GM12878 (cell line): ENCODE measurements at regions of chr5 and their contacts with region 1.

Region 1: DNA sequence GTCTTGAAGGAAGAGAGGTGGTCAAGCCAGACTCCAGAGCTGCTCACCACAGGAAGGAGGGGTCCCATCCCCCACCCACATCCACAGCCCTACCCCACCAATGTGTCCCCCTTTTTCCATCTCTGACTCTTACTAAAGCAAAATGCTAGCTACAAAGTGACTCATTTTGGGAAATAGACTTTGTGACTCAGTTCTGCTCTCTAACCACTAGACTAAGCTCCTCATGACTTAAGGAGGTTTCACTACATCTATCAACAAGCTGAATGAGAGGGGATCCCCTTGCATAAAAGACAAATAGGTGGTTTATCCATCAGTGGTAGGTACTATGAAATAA is 35.1 kb upstream of the ADRB2 start:
- DNase-seq: peak; percentile 77
- ATAC-seq: peak; percentile 96
- H3K4me3 ChIP-seq: no peak overlapping the region
- H3K27ac ChIP-seq: no peak overlapping the region
- H3K4me1 ChIP-seq: peaks cover 37% of the 10 kb centered on the region
- H3K27me3 ChIP-seq: no peaks in the 10 kb centered on the region
- CTCF ChIP-seq: no peak
- EP300 ChIP-seq: peak; percentile 53 to 93; a peak in 2 of 4 replicates
- POLR2A ChIP-seq: no peak
- RAD21 ChIP-seq: 0 out of 2 replicates have a peak, but pooled peaks have one; percentile 6

Region 2: GRCh38 chr5:148659641-148660345 is 131.5 kb before region 1 on chr5:
- CTCF ChIA-PET with region 1: no interaction called
- POLR2A ChIA-PET with region 1: no interaction called
- RAD21 ChIA-PET with region 1: no interaction called
- SMC1A ChIA-PET with region 1: no interaction called
- in situ Hi-C with region 1: no loop called
- intact Hi-C with region 1: no loop called
- DNase-seq: no peak
- ATAC-seq: no peak
- H3K4me3 ChIP-seq: no peak overlapping the region
- H3K27ac ChIP-seq: no peak overlapping the region
- H3K4me1 ChIP-seq: no peaks in the 10 kb centered on the region
- H3K27me3 ChIP-seq: no peaks in the 10 kb centered on the region; a peak in 2 of 4 replicates
- CTCF ChIP-seq: no peak
- EP300 ChIP-seq: no peak
- POLR2A ChIP-seq: no peak
- RAD21 ChIP-seq: no peak

Region 3: GRCh38 chr5:148746826-148747535 is 44.3 kb before region 1 on chr5:
- CTCF ChIA-PET with region 1: interaction called, 8 read pairs
- POLR2A ChIA-PET with region 1: interaction called, 8 read pairs
- RAD21 ChIA-PET with region 1: interaction called, 4 read pairs
- SMC1A ChIA-PET with region 1: interaction called, 8 read pairs
- in situ Hi-C with region 1: no loop called
- intact Hi-C with region 1: loop called (anchors 5 kb)
- DNase-seq: no peak
- ATAC-seq: peak; percentile 90
- H3K4me3 ChIP-seq: no peak overlapping the region
- H3K27ac ChIP-seq: no peak overlapping the region
- H3K4me1 ChIP-seq: peaks cover 9% of the 10 kb centered on the region
- H3K27me3 ChIP-seq: no peaks in the 10 kb centered on the region
- CTCF ChIP-seq: no peak
- EP300 ChIP-seq: no peak
- POLR2A ChIP-seq: no peak
- RAD21 ChIP-seq: no peak

Region 4: GRCh38 chr5:148760945-148761638 is 30.2 kb before region 1 on chr5:
- CTCF ChIA-PET with region 1: interaction called, 5 read pairs
- POLR2A ChIA-PET with region 1: no interaction called
- RAD21 ChIA-PET with region 1: interaction called, 4 read pairs
- SMC1A ChIA-PET with region 1: interaction called, 11 read pairs
- in situ Hi-C with region 1: no loop called
- intact Hi-C with region 1: no loop called
- DNase-seq: peak; percentile 59
- ATAC-seq: peak; percentile 100
- H3K4me3 ChIP-seq: no peak overlapping the region
- H3K27ac ChIP-seq: no peak overlapping the region
- H3K4me1 ChIP-seq: peaks cover 8% of the 10 kb centered on the region
- H3K27me3 ChIP-seq: no peaks in the 10 kb centered on the region
- CTCF ChIP-seq: no peak
- EP300 ChIP-seq: no peak
- POLR2A ChIP-seq: no peak
- RAD21 ChIP-seq: no peak

Region 5: GRCh38 chr5:148820461-148821395 is 29.4 kb after region 1 on chr5:
- CTCF ChIA-PET with region 1: interaction called, 10 read pairs
- POLR2A ChIA-PET with region 1: no interaction called
- RAD21 ChIA-PET with region 1: no interaction called
- SMC1A ChIA-PET with region 1: interaction called, 5 read pairs
- in situ Hi-C with region 1: no loop called
- intact Hi-C with region 1: no loop called
- DNase-seq: no peak
- ATAC-seq: peak; percentile 76
- H3K4me3 ChIP-seq: no peak overlapping the region
- H3K27ac ChIP-seq: no peak overlapping the region
- H3K4me1 ChIP-seq: peaks cover 5% of the 10 kb centered on the region
- H3K27me3 ChIP-seq: no peaks in the 10 kb centered on the region
- CTCF ChIP-seq: peak; percentile 49 to 59 (median 59); a peak in 5 of 6 replicates
- EP300 ChIP-seq: no peak
- POLR2A ChIP-seq: no peak
- RAD21 ChIP-seq: peak; percentile 41

Region 6: GRCh38 chr5:148928141-148928540 is 136.8 kb after region 1 on chr5:
- CTCF ChIA-PET with region 1: no interaction called
- POLR2A ChIA-PET with region 1: no interaction called
- RAD21 ChIA-PET with region 1: no interaction called
- SMC1A ChIA-PET with region 1: no interaction called
- in situ Hi-C with region 1: no loop called
- intact Hi-C with region 1: no loop called
- DNase-seq: no peak
- ATAC-seq: peak; percentile 28; the same call in 1 of the 3 replicates
- H3K4me3 ChIP-seq: no peak overlapping the region
- H3K27ac ChIP-seq: no peak overlapping the region
- H3K4me1 ChIP-seq: no peaks in the 10 kb centered on the region
- H3K27me3 ChIP-seq: no peaks in the 10 kb centered on the region
- CTCF ChIP-seq: no peak
- EP300 ChIP-seq: no peak
- POLR2A ChIP-seq: no peak
- RAD21 ChIP-seq: no peak

Region 7: DNA sequence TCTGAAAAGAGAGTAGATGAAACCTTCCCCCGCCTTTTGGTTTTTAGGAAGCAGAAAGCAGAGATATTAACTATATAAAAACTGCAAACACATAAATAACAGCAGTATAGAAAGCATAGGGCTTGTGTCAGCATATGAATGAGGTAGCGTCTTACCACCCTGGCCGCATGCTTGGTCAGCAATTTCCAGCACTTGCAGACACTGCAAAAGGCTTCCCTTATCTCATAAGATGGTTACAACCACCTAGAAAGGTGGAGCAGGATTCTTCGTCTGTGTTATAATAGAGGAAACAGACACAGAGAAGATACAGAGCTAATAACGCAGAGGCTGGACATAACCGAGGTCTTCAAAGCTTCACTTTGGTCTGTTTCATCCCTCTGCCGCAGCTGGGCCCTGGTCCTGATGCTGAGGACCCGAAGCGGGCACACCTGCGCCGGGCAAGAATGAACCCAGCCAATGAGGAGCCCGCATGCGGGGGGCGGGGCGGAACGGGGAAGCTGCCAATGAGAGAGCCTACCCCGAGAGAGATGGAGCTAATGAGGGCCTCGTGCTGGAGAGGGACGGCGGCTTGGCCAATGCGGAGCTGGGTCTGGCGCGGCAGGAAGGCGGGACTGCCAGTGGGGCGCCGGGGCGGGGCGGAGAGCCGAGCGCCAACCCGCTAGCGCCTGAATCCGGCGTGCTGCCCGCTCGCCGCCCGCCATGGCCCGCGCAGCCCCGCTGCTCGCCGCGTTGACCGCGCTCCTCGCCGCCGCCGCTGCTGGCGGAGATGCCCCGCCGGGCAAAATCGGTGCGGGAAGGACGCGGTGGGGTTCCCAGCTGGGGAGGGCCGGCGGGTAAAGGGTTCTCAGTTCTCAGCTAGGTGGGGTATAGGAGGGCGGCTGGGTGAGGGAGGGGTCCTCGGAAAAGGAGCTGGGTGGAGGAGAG is 566.3 kb after region 1 on chr5 and contains the start of gene PCYOX1L:
- CTCF ChIA-PET with region 1: no interaction called
- POLR2A ChIA-PET with region 1: no interaction called
- RAD21 ChIA-PET with region 1: no interaction called
- SMC1A ChIA-PET with region 1: no interaction called
- in situ Hi-C with region 1: no loop called
- intact Hi-C with region 1: no loop called
- DNase-seq: peak; percentile 82
- ATAC-seq: peak; percentile 100
- H3K4me3 ChIP-seq: peak within 1 kb of the TSS; percentile 84
- H3K27ac ChIP-seq: peak within 1 kb of the TSS; percentile 48
- H3K4me1 ChIP-seq: peaks cover 13% of the 10 kb centered on the region
- H3K27me3 ChIP-seq: no peaks in the 10 kb centered on the region
- CTCF ChIP-seq: no peak
- EP300 ChIP-seq: no peak
- POLR2A ChIP-seq: peak; percentile 87
- RAD21 ChIP-seq: no peak
- polyA plus RNA-seq, gene PCYOX1L: 2.9 to 5.4 TPM